Mammary epithelial cell (primary cell): ENCODE measurements at regions of chr22 and their contacts with region 1.

Region 1: DNA sequence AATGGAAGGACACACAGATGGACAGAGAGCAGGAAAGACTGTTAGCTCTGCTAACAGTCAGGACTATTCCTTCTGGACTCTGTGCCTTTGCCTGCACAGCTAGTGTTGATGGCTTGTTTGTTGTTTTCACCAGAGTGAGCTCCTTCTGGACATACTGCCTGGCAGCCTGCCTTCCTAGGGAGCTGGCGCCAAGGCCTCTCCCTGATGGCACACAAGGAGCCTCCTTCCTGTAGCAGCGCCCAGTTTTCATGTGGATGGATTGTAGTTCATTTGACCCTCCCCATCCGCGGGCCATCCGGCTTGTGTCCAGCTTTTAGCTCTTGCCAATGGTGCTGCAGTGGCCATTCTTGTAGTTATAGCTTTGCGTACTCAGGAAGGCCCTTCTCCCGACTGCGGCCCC is 16.6 kb upstream of the BCR start:
- DNase-seq: no peak
- H3K4me3 ChIP-seq: no peak overlapping the region
- H3K27ac ChIP-seq: no peak overlapping the region
- H3K4me1 ChIP-seq: no peaks in the 10 kb centered on the region
- H3K27me3 ChIP-seq: no peaks in the 10 kb centered on the region
- CTCF ChIP-seq: no peak

Region 2: GRCh38 chr22:22770280-22770871 is 393.3 kb before region 1 on chr22:
- CTCF ChIA-PET with region 1: no interaction called
- dilution Hi-C with region 1: no loop called
- in situ Hi-C with region 1: no loop called
- intact Hi-C with region 1: no loop called
- DNase-seq: peak; percentile 10
- H3K4me3 ChIP-seq: no peak overlapping the region
- H3K27ac ChIP-seq: no peak overlapping the region
- H3K4me1 ChIP-seq: no peaks in the 10 kb centered on the region
- H3K27me3 ChIP-seq: no peaks in the 10 kb centered on the region
- CTCF ChIP-seq: peak; percentile 68 to 85

Region 3: DNA sequence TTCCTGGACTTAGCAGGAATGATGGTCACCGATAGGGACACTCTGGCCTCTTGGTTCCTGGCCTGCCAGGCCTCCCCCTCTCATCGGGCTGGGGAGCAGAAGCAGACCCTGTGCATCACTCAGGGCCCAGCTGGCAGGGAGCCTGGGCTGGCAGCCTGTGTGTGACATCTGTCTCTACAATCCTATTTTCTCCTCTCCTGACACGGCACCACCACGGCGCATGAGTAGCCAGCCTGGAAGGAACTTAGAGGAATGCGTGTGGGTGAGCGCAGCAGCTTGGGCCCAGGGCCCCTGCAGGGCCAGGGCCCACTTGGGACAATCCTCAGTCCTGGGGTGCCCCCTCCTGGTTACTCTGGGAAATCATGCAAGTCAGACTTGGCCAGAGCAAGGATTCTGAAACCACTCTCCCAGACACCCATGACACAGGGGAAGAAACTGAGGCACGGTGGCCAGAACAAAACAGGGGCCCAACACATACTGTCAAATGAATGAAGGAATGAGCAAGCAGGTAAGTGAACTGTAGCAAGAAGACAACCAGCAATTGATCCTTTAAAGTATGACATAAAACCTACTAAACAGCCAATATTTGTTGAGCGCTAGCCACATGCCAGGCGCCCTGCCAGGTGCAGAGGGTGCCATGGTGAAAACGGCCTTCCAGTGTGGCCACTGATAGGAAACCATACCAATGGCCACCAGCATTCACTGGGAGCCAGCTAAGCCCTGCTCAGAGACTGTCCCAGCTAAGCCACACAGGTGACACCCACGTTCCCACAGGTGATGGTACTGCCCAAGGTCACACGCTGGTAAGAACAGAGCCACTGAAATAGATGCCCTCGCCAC is 35.2 kb before region 1 on chr22:
- CTCF ChIA-PET with region 1: no interaction called
- dilution Hi-C with region 1: no loop called
- in situ Hi-C with region 1: no loop called
- intact Hi-C with region 1: no loop called
- DNase-seq: peak; percentile 47
- H3K4me3 ChIP-seq: no peak overlapping the region
- H3K27ac ChIP-seq: no peak overlapping the region
- H3K4me1 ChIP-seq: no peaks in the 10 kb centered on the region
- H3K27me3 ChIP-seq: no peaks in the 10 kb centered on the region
- CTCF ChIP-seq: peak; percentile 50 to 79

Region 4: DNA sequence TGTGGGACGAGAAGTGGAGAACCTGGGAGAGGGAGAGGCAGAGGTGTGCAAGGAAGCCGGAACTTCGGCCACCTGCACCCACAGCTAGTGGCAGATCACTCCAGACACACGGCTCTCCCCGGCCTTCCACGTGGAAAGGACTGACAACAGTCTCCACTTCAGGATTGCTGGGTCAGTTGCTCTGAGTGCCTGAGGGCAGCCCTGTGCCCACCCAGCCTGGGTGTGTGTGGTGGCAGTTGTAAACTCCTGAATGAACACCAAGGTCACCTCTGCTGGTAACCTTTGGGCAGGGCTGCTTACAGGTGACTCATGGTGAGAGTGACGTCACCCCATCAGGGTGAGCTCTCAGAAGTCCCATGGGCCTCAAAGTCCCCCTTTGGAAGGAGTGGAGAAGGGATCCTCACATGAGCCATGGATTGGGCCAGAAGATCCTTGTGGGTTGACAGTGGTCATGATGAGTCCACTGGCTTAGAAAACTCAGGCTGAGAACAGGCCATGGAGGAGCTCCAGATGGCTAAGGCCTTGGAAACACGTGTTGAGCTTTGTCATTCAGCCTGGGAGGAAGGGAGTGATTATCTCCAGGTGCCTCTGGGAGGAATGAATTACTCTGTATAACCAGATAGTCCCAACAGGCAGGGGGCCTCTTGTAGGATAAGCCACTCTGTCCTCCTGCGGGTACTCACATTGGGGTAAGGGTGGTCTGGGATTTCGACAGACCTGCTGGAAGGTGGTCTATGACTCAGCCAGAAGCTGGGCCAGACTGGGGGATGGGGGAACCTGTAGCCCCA is 88.0 kb after region 1 on chr22:
- CTCF ChIA-PET with region 1: no interaction called
- dilution Hi-C with region 1: no loop called
- in situ Hi-C with region 1: no loop called
- intact Hi-C with region 1: no loop called
- DNase-seq: peak; percentile 46
- H3K4me3 ChIP-seq: no peak overlapping the region
- H3K27ac ChIP-seq: no peak overlapping the region
- H3K4me1 ChIP-seq: peaks cover 7% of the 10 kb centered on the region
- H3K27me3 ChIP-seq: no peaks in the 10 kb centered on the region
- CTCF ChIP-seq: no peak

Region 5: DNA sequence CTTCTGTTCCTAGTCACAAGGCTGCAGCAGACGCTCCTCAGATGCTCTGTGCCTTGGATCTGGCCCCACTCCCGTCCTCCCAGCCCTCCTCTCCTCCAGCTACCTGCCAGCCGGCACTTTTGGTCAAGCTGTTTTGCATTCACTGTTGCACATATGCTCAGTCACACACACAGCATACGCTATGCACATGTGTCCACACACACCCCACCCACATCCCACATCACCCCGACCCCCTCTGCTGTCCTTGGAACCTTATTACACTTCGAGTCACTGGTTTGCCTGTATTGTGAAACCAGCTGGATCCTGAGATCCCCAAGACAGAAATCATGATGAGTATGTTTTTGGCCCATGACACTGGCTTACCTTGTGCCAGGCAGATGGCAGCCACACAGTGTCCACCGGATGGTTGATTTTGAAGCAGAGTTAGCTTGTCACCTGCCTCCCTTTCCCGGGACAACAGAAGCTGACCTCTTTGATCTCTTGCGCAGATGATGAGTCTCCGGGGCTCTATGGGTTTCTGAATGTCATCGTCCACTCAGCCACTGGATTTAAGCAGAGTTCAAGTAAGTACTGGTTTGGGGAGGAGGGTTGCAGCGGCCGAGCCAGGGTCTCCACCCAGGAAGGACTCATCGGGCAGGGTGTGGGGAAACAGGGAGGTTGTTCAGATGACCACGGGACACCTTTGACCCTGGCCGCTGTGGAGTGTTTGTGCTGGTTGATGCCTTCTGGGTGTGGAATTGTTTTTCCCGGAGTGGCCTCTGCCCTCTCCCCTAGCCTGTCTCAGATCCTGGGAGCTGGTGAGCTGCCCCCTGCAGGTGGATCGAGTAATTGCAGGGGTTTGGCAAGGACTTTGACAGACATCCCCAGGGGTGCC is 126.4 kb after region 1 on chr22:
- CTCF ChIA-PET with region 1: no interaction called
- dilution Hi-C with region 1: loop called (anchors 5 kb)
- in situ Hi-C with region 1: no loop called
- intact Hi-C with region 1: no loop called
- DNase-seq: peak; percentile 41
- H3K4me3 ChIP-seq: no peak overlapping the region
- H3K27ac ChIP-seq: no peak overlapping the region
- H3K4me1 ChIP-seq: no peaks in the 10 kb centered on the region
- H3K27me3 ChIP-seq: no peaks in the 10 kb centered on the region
- CTCF ChIP-seq: peak; percentile 72 to 82

Region 6: DNA sequence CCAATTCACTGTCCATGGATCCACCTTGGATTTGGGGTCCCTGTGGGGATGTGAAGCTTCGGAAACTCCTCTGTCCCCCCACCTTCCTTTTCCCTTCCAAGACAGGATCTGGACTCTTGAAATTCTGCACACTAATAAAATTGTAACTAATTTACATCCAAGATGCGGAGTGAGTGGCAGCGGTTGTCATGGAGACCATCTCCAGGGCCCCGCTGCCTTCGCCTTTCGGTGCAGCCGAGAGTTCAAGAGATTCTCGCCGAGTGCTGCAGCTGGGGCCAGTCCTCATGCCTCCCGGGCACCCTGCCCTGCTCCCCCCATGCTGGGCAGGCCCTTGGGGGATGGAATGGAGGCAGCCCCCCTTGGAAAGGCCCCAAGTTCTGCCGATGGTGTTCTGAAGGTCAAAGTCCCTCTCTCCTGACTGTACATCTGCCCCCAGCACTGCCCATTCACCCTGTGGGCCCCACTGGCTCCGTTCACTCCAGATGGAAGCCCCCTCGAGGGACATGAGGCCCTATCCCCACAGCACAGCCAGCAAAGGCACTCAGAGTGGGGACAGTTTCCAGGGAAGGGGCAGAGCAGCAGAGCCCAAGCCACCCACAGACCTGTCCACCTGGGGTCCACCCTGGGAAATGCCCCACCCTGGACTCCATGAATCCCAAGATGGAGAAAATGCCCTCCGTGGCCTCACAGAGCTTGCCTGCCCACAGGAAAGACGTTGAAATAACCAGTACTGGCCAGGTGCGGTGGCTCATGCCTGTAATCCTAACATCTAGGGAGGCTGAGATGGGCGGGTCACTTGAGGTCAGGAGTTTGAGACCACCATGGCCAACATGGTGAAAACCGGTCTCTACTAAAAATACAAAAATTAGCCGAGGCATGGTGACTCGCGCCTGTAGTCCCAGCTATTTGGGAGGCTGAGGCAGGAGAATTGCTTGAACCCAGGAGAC is 390.5 kb after region 1 on chr22:
- CTCF ChIA-PET with region 1: no interaction called
- dilution Hi-C with region 1: no loop called
- in situ Hi-C with region 1: no loop called
- intact Hi-C with region 1: no loop called
- DNase-seq: no peak
- H3K4me3 ChIP-seq: no peak overlapping the region
- H3K27ac ChIP-seq: no peak overlapping the region
- H3K4me1 ChIP-seq: no peaks in the 10 kb centered on the region
- H3K27me3 ChIP-seq: no peaks in the 10 kb centered on the region
- CTCF ChIP-seq: no peak